Posterior vena cava (tissue), 2 donors: ENCODE measurements at regions of chr2 and their contacts with region 1.

Region 1: DNA sequence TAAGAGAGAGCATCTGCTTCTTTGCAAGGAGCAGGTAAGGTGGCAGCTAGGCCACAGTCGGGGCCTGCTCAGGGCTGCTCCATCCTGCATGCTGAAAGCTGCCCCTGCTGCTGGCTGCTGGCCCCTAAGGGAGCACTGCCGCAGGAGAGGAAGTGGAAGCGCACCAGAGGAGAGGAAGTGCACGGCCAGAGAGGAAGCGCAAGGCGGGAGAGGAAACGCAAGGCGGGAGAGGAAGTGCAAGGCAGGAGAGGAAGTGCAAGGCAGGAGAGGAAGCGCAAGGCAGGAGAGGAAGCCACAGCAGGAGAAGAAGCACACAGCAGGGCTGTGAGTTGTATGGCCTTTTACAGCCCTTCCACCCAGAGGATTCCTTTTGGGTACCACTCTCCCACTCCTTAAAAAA is 539.0 kb upstream of the TNP1 start:
- DNase-seq: no peak

Region 2: DNA sequence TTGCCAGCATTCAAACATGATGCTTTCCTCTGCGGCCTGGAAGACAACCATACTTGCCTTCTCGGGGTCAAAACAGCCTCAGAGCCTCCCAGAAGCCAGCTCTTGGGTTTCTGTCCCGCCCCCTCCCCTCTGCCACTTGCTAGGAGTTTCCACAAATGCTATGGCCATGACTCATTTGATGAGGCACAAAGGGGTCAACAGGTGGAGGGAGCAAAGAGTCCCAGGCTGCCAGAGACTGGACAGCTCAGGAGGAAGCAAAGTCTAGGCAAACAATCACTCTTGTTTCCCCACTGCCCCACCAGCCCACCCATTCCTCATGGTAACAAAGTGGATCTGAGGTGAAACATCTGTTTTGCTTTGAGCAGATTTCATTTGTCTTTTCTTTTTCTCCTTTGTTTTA is 52.8 kb after region 1 on chr2:
- intact Hi-C with region 1: loop called in 1 of 2 experiments (anchors 2 kb)
- DNase-seq: no peak